ENCODE measurements at regions of chr3 and their contacts with region 1.

Region 1: GRCh38 chr3:107264888-107265287 is 112.4 kb upstream of the CCDC54 start:
- DNase-seq: no peak
- H3K4me3 Mint-ChIP-seq: no peak overlapping the region
- H3K27ac Mint-ChIP-seq: no peak overlapping the region
- H3K4me1 Mint-ChIP-seq: peaks cover 6% of the 10 kb centered on the region
- H3K27me3 Mint-ChIP-seq: peaks cover 4% of the 10 kb centered on the region

Region 2: DNA sequence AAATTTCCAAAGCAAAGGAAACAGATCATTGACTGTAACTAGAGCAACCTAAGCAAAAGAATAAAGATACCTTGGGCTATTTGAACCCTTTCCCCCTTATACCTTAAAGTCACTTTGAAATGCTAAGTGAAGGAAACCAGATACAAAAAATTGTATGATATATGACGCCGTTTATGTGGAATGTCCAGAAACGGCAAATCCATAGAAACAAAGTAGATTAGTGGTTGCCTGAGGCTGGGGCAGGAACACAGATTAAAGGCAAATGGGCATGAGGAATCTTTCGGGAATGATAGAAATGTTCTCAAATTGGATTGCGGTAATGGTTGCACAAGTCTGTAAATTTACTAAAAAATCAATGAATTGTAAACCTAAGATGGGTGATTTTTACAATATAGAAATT is 47.7 kb before region 1 on chr3:
- CTCF ChIA-PET with region 1: no interaction called
- POLR2A ChIA-PET with region 1: no interaction called
- intact Hi-C with region 1: no loop called
- DNase-seq: no peak
- H3K4me3 Mint-ChIP-seq: no peak overlapping the region
- H3K27ac Mint-ChIP-seq: no peak overlapping the region
- H3K4me1 Mint-ChIP-seq: peaks cover 8% of the 10 kb centered on the region
- H3K27me3 Mint-ChIP-seq: peaks cover 11% of the 10 kb centered on the region

Region 3: DNA sequence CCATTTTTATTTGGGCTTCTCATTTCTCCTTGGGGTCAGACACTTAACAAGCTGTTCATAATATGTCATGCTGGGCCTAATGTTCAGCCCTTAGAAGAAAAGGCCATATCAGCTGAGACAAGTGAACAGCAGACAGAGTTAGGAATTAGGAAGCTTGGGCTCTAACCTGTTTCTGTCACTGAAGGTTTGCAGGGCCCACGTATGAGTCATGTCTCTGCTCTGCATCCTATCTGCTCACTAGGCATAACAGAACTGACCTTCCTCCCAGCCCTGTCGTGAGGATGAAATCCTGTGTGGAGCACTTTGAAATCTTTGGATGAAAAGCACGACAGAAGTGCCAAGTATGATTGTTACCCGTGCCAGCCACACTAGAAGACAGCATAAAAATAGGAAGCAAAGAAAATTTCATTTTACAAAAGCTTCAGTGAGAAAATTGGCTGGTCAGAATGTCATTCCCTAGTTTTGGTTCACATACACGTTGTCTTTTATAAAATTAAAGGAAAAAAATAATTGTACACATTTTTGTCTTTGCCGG is 852.4 kb after region 1 on chr3:
- CTCF ChIA-PET with region 1: no interaction called
- POLR2A ChIA-PET with region 1: no interaction called
- intact Hi-C with region 1: loop called (anchors 5 kb)
- DNase-seq: no peak
- H3K4me3 Mint-ChIP-seq: no peak overlapping the region
- H3K27ac Mint-ChIP-seq: no peak overlapping the region
- H3K4me1 Mint-ChIP-seq: peaks cover 29% of the 10 kb centered on the region
- H3K27me3 Mint-ChIP-seq: no peaks in the 10 kb centered on the region

Measured in activated CD4-positive, alpha-beta memory T cell treated with anti-CD3 and anti-CD28 coated beads for 36 hours (primary cell).